Activated CD8-positive, alpha-beta memory T cell treated with anti-CD3 and anti-CD28 coated beads, Interleukin-2, amount 10 ng/mL, durations not matched to agents 7 days and 5 days (primary cell): ENCODE measurements at regions of chr20 and their contacts with region 1.

Region 1: GRCh38 chr20:53939572-53940359 is 130.6 kb downstream of the BCAS1 start:
- DNase-seq: peak; percentile 89
- ATAC-seq: peak; percentile 84
- H3K4me3 Mint-ChIP-seq: no peak overlapping the region
- H3K27ac Mint-ChIP-seq: peak overlapping the region; percentile 21
- H3K4me1 Mint-ChIP-seq: peaks cover 46% of the 10 kb centered on the region
- H3K27me3 Mint-ChIP-seq: no peaks in the 10 kb centered on the region

Region 2: GRCh38 chr20:53413186-53413631 is 526.6 kb before region 1 on chr20:
- CTCF ChIA-PET with region 1: interaction called, 20 read pairs
- DNase-seq: peak; percentile 76
- ATAC-seq: peak; percentile 64
- H3K4me3 Mint-ChIP-seq: no peak overlapping the region
- H3K27ac Mint-ChIP-seq: no peak overlapping the region
- H3K4me1 Mint-ChIP-seq: peaks cover 6% of the 10 kb centered on the region
- H3K27me3 Mint-ChIP-seq: no peaks in the 10 kb centered on the region

Region 3: GRCh38 chr20:53547664-53548239 is 392.0 kb before region 1 on chr20:
- CTCF ChIA-PET with region 1: interaction called, 11 read pairs
- DNase-seq: peak; percentile 51
- ATAC-seq: peak; percentile 51
- H3K4me3 Mint-ChIP-seq: no peak overlapping the region
- H3K27ac Mint-ChIP-seq: no peak overlapping the region
- H3K4me1 Mint-ChIP-seq: peaks cover 4% of the 10 kb centered on the region
- H3K27me3 Mint-ChIP-seq: no peaks in the 10 kb centered on the region

Region 4: GRCh38 chr20:53578492-53579222 is 361.1 kb before region 1 on chr20:
- CTCF ChIA-PET with region 1: interaction called, 43 read pairs
- DNase-seq: peak; percentile 72
- ATAC-seq: peak; percentile 34
- H3K4me3 Mint-ChIP-seq: peak overlapping the region; percentile 89
- H3K27ac Mint-ChIP-seq: peak overlapping the region; percentile 88
- H3K4me1 Mint-ChIP-seq: peaks cover 78% of the 10 kb centered on the region
- H3K27me3 Mint-ChIP-seq: no peaks in the 10 kb centered on the region

Region 5: DNA sequence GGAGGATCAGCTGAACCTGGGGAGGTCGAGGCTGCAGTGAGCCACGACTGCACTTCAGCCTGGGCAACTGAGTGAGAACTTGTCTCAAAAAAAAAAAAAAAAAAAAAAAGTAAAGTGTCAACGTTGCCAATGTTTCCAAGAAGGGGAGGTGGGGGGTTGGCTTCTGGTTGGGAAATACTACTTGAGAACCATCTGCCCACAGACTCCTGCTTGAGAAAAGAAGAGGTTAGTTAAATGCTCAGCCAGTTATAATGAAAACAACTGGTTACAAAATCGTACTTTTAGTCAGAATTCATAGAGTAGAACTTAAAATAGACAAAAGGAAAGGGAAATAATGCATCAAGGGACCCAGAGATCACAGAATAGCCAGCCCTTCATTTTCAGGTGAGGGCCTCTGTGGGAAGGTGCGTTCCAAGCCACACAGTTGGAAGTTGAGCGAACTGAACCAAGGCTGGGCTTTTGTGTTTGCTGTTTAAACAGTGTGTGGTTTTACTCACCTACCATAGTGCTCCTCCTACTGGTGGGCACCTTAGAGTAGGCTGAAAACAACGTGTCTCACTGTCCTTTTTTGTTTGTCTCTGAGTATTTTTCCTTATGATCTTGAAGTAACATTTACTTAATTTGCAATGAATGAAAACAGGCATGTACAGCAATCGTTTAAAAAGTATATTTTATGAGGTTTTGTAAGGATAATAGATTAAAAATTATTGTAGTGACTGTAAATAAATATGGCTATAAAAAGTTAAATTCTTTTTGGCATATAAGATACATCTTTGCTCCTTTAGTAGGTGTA is 70.1 kb before region 1 on chr20:
- CTCF ChIA-PET with region 1: interaction called, 12 read pairs
- DNase-seq: peak; percentile 86
- ATAC-seq: peak; percentile 76
- H3K4me3 Mint-ChIP-seq: peak overlapping the region; percentile 18
- H3K27ac Mint-ChIP-seq: peak overlapping the region; percentile 90
- H3K4me1 Mint-ChIP-seq: peaks cover 74% of the 10 kb centered on the region
- H3K27me3 Mint-ChIP-seq: no peaks in the 10 kb centered on the region

Region 6: GRCh38 chr20:54062812-54063280 is 123.1 kb after region 1 on chr20:
- CTCF ChIA-PET with region 1: interaction called, 16 read pairs
- DNase-seq: no peak
- ATAC-seq: peak; percentile 59
- H3K4me3 Mint-ChIP-seq: no peak overlapping the region
- H3K27ac Mint-ChIP-seq: no peak overlapping the region
- H3K4me1 Mint-ChIP-seq: peaks cover 42% of the 10 kb centered on the region
- H3K27me3 Mint-ChIP-seq: no peaks in the 10 kb centered on the region